Common myeloid progenitor, CD34-positive (primary cell): ENCODE measurements at regions of chr16 and their contacts with region 1.

Region 1: GRCh38 chr16:29767062-29767461 is 11.0 kb upstream of the ZG16 start:
- DNase-seq: no peak
- H3K4me3 ChIP-seq: no peak overlapping the region
- H3K27ac ChIP-seq: no peak overlapping the region
- H3K4me1 ChIP-seq: peaks cover 0 to 4% (median 1%) of the 10 kb centered on the region in 4 experiments
- H3K27me3 ChIP-seq: no peaks in the 10 kb centered on the region

Region 2: DNA sequence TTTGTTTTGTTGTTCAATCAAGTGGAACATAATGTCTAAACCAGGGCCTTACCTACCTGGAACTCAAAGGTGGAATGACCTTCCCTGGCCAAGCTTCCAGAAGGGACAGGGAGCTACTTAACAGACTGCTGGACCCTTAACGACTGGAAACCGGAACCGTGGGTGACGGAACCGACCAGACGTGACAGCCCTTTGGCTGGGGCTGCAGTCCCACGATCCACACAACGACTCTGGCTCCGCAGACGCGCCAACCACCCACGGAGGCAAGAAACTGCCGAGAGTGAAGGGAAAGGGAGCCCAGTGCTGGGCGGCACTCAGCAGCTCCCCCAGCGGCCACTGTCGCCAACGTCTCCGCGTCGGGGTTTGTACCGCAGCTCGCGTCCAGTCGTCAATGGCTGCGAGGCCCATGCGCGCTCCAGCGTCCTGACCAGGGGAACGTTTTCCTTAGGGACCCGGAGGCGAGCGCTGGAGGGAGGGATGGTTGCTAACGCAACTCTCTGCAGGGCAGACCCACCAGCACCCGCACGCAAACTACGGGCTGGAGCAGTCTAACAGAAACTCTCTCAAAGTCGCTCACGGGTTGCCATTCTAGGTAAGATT is 17.9 kb after region 1 on chr16:
- CTCF ChIA-PET with region 1: interaction called, 14 read pairs
- POLR2A ChIA-PET with region 1: no interaction called
- DNase-seq: peak; percentile 46 to 65 (median 64)
- H3K4me3 ChIP-seq: peak overlapping the region in 3 of 7 experiments; percentile 35 to 48 (median 39)
- H3K27ac ChIP-seq: no peak overlapping the region
- H3K4me1 ChIP-seq: peaks cover 1 to 16% (median 8%) of the 10 kb centered on the region in 4 experiments
- H3K27me3 ChIP-seq: no peaks in the 10 kb centered on the region

Region 3: GRCh38 chr16:29805378-29806098 is 38.5 kb after region 1 on chr16:
- CTCF ChIA-PET with region 1: no interaction called
- POLR2A ChIA-PET with region 1: no interaction called
- DNase-seq: peak; percentile 98 to 100 (median 99)
- H3K4me3 ChIP-seq: peak overlapping the region; percentile 62 to 94 (median 79)
- H3K27ac ChIP-seq: peak overlapping the region; percentile 83 to 94
- H3K4me1 ChIP-seq: peaks cover 8 to 52% (median 42%) of the 10 kb centered on the region in 4 experiments
- H3K27me3 ChIP-seq: no peaks in the 10 kb centered on the region